H1 (cell line): ENCODE measurements at regions of chr22 and their contacts with region 1.

Region 1: DNA sequence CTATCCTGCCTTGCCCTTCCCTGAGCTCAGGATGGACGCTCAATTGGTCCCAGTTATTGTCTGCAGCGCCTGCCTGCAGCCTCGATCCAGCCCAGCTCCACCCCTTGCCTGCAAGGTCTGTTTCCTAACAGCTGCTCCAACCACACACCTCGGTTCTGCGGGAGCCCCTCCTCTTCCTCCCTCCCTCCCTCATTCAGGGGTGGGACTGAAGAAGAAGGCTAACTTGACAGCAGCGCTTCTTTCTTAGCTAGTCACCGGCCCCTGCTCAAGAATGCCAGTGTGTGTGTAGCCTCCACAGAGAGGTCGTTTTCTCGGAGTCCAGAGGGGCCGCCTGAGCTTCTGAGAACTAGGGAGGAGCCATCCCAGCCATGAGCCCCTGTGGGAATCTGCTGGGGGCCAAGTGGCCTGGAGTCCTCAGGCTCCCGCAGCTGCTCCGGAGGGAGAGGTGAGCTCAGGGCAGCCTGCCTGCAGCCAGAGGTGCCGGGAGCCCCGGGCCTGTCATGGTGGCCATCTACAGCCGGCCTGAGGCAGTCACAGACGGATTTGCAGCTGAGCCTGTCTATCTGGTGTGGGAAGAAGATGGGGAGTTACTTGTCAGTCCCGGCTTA is 36.1 kb downstream of the LIMK2 start:
- DNase-seq: peak; percentile 67 to 68
- H3K4me3 ChIP-seq: 0 out of 8 replicates have a peak overlapping the region, but pooled peaks of 1 of the 4 experiments have one; percentile 13
- H3K27ac ChIP-seq: no peak overlapping the region
- H3K4me1 ChIP-seq: peaks cover 8 to 13% (median 12%) of the 10 kb centered on the region in 4 experiments
- H3K27me3 ChIP-seq: no peaks in the 10 kb centered on the region
- CTCF ChIP-seq: no peak
- EP300 ChIP-seq: no peak
- POLR2A ChIP-seq: no peak
- RAD21 ChIP-seq: no peak

Region 2: DNA sequence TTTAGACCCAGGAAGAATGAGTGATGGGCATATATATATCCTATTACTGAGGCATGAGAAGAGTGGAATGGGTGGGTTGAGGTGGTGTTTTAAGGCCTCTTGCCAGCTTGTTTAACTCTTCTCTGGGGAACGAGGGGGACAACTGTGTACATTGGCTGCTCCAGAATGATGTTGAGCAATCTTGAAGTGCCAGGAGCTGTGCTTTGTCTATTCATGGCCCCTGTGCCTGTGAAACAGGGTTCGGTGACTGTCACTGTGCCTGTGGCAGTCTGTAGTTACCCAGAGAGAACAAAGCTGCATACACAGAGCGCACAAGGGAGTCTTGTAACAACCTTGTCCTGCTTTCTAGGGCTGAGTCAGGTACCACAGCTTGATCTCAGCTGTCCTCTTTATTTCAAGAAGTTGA is 24.5 kb before region 1 on chr22:
- CTCF ChIA-PET with region 1: interaction called, 28 read pairs
- POLR2A ChIA-PET with region 1: interaction called, 7 read pairs
- DNase-seq: no peak
- H3K4me3 ChIP-seq: no peak overlapping the region
- H3K27ac ChIP-seq: no peak overlapping the region
- H3K4me1 ChIP-seq: no peaks in the 10 kb centered on the region; a peak in 2 of 7 replicates
- H3K27me3 ChIP-seq: no peaks in the 10 kb centered on the region
- CTCF ChIP-seq: no peak
- EP300 ChIP-seq: no peak
- POLR2A ChIP-seq: no peak
- RAD21 ChIP-seq: no peak